ENCODE measurements at regions of chr2 and their contacts with region 1.

Region 1: GRCh38 chr2:167264380-167264779 is 376.1 kb downstream of the XIRP2 start:
- DNase-seq: peak; percentile 6
- H3K4me3 ChIP-seq: no peak overlapping the region
- H3K27ac ChIP-seq: no peak overlapping the region
- H3K4me1 ChIP-seq: no peaks in the 10 kb centered on the region
- H3K27me3 ChIP-seq: no peaks in the 10 kb centered on the region
- CTCF ChIP-seq: peak; percentile 32 to 55

Region 2: GRCh38 chr2:167411367-167411766 is 147.0 kb after region 1 on chr2:
- CTCF ChIA-PET with region 1: no interaction called
- dilution Hi-C with region 1: no loop called
- in situ Hi-C with region 1: no loop called
- intact Hi-C with region 1: loop called (anchors 5 kb)
- DNase-seq: no peak
- H3K4me3 ChIP-seq: no peak overlapping the region
- H3K27ac ChIP-seq: no peak overlapping the region
- H3K4me1 ChIP-seq: no peaks in the 10 kb centered on the region
- H3K27me3 ChIP-seq: no peaks in the 10 kb centered on the region
- CTCF ChIP-seq: peak in 1 of 2 donors; percentile 3

Region 3: DNA sequence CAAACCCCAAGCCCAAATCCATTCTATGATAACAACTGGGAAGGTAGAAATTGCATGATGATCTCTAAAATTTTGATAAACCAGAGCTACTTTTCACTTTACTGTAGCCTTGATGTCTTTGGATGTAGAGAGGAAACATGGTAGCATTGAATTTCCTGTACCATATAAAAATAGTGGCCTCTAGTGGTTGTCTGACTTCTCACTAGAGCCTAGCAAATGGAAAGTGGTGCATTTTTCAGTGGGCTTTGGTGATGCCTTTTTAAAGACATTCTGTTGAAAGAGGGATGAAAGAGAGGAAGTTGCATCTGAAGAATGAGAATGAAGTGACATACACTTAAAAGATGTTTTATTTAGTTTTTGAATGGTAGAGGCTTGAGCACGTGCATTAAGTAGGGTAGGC is 286.1 kb after region 1 on chr2:
- CTCF ChIA-PET with region 1: no interaction called
- dilution Hi-C with region 1: no loop called
- in situ Hi-C with region 1: no loop called
- intact Hi-C with region 1: loop called (anchors 1 kb)
- DNase-seq: no peak
- H3K4me3 ChIP-seq: no peak overlapping the region
- H3K27ac ChIP-seq: no peak overlapping the region
- H3K4me1 ChIP-seq: no peaks in the 10 kb centered on the region
- H3K27me3 ChIP-seq: no peaks in the 10 kb centered on the region
- CTCF ChIP-seq: peak; percentile 27 to 35

Measured in mammary epithelial cell (primary cell).